HepG2 (cell line): ENCODE measurements at regions of chr22 and their contacts with region 1.

Region 1: DNA sequence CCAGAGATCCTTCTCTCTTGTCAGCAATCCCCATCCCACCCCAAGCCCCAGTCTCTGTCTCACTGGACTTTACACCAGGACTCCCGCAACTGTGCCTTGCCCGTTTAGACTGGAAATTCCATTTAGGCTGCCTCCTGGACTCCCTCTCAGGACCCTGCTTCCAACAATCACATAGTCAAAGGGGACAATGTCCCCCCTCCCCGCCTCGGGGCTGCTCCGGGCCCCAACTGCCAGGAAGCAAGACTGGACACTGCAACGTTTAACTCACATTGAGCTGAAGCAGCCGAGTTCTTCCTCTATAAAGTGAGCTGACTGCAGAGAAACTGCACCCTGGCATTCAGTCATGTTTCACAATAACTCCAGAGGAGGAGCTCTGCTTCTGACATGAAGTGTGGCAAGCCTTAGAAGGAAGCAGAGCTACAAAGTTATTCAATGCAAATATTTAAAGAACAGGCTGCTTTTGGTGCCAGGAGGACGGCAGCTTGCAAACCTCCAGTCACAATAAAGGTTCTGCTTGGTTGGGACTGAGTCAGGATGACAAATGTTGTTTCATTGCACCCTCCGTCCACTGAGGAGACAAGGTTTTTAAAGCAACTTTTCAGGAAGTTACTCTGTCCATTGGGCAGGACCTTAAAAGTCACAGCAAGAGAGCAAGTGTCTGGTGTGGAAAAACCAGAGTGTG is 19.9 kb downstream of the PACSIN2 start:
- DNase-seq: peak; percentile 98
- ATAC-seq: peak; percentile 72
- H3K4me3 ChIP-seq: peak overlapping the region; percentile 47 to 81 (median 64)
- H3K27ac ChIP-seq: peak overlapping the region; percentile 100
- H3K4me1 ChIP-seq: peaks cover 96% of the 10 kb centered on the region
- H3K27me3 ChIP-seq: no peaks in the 10 kb centered on the region
- CTCF ChIP-seq: peak; percentile 20; the same call in 1 of the 2 replicates
- EP300 ChIP-seq: peak in 1 of 2 experiments; percentile 90; a peak in 2 of 4 replicates
- POLR2A ChIP-seq: peak; percentile 37 to 86; a peak in 3 of 4 replicates
- RAD21 ChIP-seq: 0 out of 2 replicates have a peak, but pooled peaks have one; percentile 4

Region 2: DNA sequence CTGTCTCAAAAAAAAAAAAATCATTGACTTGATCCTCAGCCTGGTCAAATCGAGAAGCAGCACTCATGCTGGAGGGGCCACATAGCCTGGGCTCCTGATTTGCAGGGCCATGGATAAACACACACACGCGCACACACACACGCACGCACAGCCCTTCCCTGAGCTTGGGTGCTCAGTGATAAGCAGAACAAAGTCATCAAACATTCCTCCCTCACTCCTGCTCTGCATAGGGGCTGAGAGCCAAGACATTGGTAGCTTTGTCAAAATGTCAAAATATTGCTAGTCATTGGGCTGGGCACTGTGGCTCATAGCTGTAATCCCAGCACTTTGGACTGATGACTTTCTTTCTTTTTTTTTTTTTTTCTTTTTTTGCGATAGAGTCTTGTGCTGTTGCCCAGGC is 240.4 kb before region 1 on chr22:
- CTCF ChIA-PET with region 1: no interaction called
- POLR2A ChIA-PET with region 1: no interaction called
- in situ Hi-C with region 1: no loop called
- intact Hi-C with region 1: no loop called
- DNase-seq: peak; percentile 94
- ATAC-seq: peak; percentile 85
- H3K4me3 ChIP-seq: no peak overlapping the region
- H3K27ac ChIP-seq: peak overlapping the region; percentile 80
- H3K4me1 ChIP-seq: peaks cover 69% of the 10 kb centered on the region
- H3K27me3 ChIP-seq: no peaks in the 10 kb centered on the region; a peak in 1 of 5 replicates
- CTCF ChIP-seq: no peak
- EP300 ChIP-seq: peak in 1 of 2 experiments; percentile 64; a peak in 2 of 4 replicates
- POLR2A ChIP-seq: no peak
- RAD21 ChIP-seq: no peak

Region 3: DNA sequence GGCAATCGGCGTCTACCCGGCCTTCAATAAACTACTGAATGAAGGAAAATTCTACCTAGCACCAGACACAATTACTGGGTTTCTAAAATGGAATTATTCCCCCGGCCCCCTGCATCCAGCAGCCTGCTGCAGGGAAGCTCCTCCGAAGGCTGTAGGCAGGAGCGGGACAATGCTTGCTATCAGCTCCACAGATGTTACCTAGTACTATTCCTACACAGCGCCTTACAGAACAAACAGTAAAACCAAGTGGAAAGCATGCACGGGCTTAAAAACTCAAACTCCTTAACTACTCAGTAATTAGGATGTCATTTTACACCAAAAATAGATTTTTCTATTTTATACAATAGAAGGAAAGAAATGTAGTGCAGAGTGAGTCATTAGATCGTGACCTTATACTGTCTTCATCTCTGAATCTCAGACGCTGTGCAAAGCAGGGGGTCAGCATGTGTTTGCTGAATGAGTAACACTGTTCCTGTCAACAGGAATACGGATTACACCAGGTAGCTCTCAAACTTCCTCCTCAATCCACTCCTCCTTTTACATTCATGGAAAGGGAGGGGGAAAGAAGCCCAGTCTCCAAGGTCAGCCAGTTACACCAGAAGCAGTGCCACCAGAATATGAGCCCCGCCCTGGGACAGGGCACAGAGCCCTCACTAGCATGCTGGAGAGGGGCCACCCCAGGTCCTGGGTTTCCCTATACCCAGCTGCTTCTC is 54.9 kb before region 1 on chr22:
- CTCF ChIA-PET with region 1: no interaction called
- POLR2A ChIA-PET with region 1: interaction called, 14 read pairs
- in situ Hi-C with region 1: loop called (anchors 5 kb)
- intact Hi-C with region 1: loop called (anchors 10 kb)
- DNase-seq: peak; percentile 88
- ATAC-seq: peak; percentile 89
- H3K4me3 ChIP-seq: no peak overlapping the region; a peak in 1 of 6 replicates
- H3K27ac ChIP-seq: peak overlapping the region; percentile 23
- H3K4me1 ChIP-seq: peaks cover 76% of the 10 kb centered on the region
- H3K27me3 ChIP-seq: no peaks in the 10 kb centered on the region
- CTCF ChIP-seq: 0 out of 2 replicates have a peak, but pooled peaks have one; percentile 4
- EP300 ChIP-seq: peak in 1 of 2 experiments; percentile 84; a peak in 2 of 4 replicates
- POLR2A ChIP-seq: no peak
- RAD21 ChIP-seq: no peak

Region 4: DNA sequence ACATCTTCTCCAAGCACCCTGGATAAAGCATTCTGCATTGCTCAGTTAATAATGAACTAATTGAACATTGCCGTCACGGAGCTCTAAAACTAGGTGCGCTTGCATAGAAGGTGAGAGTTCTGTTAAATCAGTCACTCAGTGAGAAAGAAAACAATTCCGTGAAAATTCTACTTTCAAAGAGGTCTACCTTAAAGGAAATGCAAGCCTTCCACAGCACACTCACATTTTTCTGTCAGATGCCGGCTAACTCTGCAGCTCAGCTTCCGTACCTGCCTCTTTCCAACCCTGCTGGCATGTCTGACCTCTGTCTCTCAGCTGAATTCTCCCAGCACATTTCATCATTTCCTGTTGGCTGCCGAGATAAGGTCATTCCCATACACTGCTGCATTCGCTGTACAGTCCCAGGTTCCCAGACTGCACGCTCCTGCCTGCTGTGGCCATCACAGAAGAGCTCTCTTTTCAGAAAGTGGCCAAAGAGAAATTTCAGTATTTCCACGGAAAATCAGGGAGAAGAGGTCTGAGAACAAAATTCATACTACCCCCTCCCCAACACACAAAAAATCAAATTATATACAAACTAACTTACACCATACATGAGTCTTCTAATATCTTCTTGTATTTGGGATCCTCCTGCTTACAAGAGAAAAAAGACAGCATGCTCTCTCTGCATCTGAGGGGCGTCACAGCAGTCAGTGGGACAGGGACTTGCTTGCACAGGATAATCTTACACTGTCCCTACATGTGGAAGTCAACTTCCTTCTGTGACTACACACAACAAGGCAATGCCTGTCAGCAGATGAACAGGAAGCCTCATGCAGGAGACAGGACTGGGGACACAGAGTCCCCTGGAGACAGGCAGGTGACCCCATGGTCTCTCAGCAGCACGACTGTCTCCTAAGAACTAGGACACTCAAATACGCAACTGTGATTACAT is 35.2 kb before region 1 on chr22:
- CTCF ChIA-PET with region 1: no interaction called
- POLR2A ChIA-PET with region 1: interaction called, 45 read pairs
- in situ Hi-C with region 1: no loop called
- intact Hi-C with region 1: no loop called
- DNase-seq: peak; percentile 92
- ATAC-seq: peak; percentile 96
- H3K4me3 ChIP-seq: peak overlapping the region; percentile 31 to 56 (median 45); a peak in 4 of 6 replicates
- H3K27ac ChIP-seq: peak overlapping the region; percentile 75
- H3K4me1 ChIP-seq: peaks cover 100% of the 10 kb centered on the region
- H3K27me3 ChIP-seq: no peaks in the 10 kb centered on the region
- CTCF ChIP-seq: peak; percentile 14; the same call in 1 of the 2 replicates
- EP300 ChIP-seq: peak; percentile 64 to 76; a peak in 2 of 4 replicates
- POLR2A ChIP-seq: peak; percentile 37 to 66; a peak in 3 of 4 replicates
- RAD21 ChIP-seq: peak; percentile 28; the same call in 1 of the 2 replicates

Region 5: DNA sequence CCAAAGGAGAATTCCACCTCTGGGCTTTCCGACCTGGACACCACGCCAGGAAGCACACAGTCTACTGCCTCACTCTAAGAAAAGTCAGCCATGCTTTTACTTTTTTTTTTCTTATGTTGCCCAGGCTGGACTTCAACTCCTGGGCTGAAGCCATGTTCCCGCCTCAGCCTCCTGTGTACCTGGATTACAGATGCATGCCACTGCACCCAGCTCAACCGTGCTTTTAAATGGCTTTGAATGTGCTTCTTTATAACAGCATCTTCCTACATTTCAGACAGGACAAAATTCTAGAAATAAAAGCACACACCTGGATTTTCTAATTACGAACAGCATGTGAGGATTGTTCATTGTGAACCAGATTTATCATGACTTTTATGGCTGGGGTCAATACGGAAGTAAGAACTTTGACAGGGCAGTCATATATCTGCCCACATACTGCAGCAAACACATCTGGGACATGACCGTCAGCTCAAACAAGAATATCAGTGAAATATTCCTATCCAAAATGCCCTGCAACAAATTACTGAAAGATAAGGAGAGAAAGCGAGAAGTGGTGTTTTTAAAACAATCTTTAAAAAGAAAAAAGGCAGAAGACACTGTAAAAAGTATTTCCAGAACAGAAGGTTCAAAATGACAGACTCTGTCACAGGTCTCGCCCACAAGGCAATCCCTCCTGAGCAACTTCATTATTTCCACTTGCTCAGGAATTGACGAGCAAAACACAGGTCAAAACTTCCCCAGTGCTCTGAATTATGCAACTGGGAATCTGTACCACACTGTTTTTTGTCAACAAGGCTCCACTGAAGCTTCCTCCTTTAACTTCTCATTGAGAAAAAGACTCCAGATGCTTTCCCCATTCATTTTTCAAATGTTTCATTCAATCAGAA is 22.1 kb before region 1 on chr22:
- CTCF ChIA-PET with region 1: no interaction called
- POLR2A ChIA-PET with region 1: interaction called, 17 read pairs
- in situ Hi-C with region 1: no loop called
- intact Hi-C with region 1: loop called (anchors 2 kb)
- DNase-seq: no peak
- ATAC-seq: no peak
- H3K4me3 ChIP-seq: no peak overlapping the region
- H3K27ac ChIP-seq: no peak overlapping the region
- H3K4me1 ChIP-seq: peaks cover 45% of the 10 kb centered on the region
- H3K27me3 ChIP-seq: no peaks in the 10 kb centered on the region
- CTCF ChIP-seq: no peak
- EP300 ChIP-seq: no peak
- POLR2A ChIP-seq: no peak
- RAD21 ChIP-seq: no peak

Region 6: GRCh38 chr22:42984814-42985552 is 10.0 kb before region 1 on chr22:
- CTCF ChIA-PET with region 1: no interaction called
- POLR2A ChIA-PET with region 1: interaction called, 13 read pairs
- in situ Hi-C with region 1: no loop called
- intact Hi-C with region 1: no loop called
- DNase-seq: no peak
- ATAC-seq: peak; percentile 29; the same call in 2 of the 3 replicates
- H3K4me3 ChIP-seq: no peak overlapping the region
- H3K27ac ChIP-seq: peak overlapping the region; percentile 30
- H3K4me1 ChIP-seq: peaks cover 68% of the 10 kb centered on the region
- H3K27me3 ChIP-seq: no peaks in the 10 kb centered on the region
- CTCF ChIP-seq: no peak
- EP300 ChIP-seq: no peak
- POLR2A ChIP-seq: no peak
- RAD21 ChIP-seq: no peak

Region 7: GRCh38 chr22:43014869-43015676 is 20.1 kb after region 1 on chr22 and contains the start of gene PACSIN2:
- CTCF ChIA-PET with region 1: no interaction called
- POLR2A ChIA-PET with region 1: interaction called, 185 read pairs
- in situ Hi-C with region 1: no loop called
- intact Hi-C with region 1: no loop called
- DNase-seq: peak; percentile 95
- ATAC-seq: peak; percentile 92
- H3K4me3 ChIP-seq: peak within 1 kb of the TSS; percentile 90 to 92 (median 91)
- H3K27ac ChIP-seq: peak within 1 kb of the TSS; percentile 66
- H3K4me1 ChIP-seq: peaks cover 80% of the 10 kb centered on the region
- H3K27me3 ChIP-seq: no peaks in the 10 kb centered on the region; a peak in 1 of 5 replicates
- CTCF ChIP-seq: no peak; the same call in none of the 2 replicates
- EP300 ChIP-seq: no peak
- POLR2A ChIP-seq: peak; percentile 99
- RAD21 ChIP-seq: no peak
- total RNA-seq, gene PACSIN2: 54.1 and 65.1 TPM in 2 replicates